Brain microvascular endothelial cell (primary cell): ENCODE measurements at regions of chrX and their contacts with region 1.

Region 1: GRCh38 chrX:110167952-110168451 is 149.9 kb downstream of the AMMECR1 start:
- DNase-seq: peak; percentile 28
- H3K4me3 ChIP-seq: no peak overlapping the region
- H3K27ac ChIP-seq: peak overlapping the region; percentile 82
- H3K27me3 ChIP-seq: no peaks in the 10 kb centered on the region
- CTCF ChIP-seq: peak; percentile 78

Region 2: DNA sequence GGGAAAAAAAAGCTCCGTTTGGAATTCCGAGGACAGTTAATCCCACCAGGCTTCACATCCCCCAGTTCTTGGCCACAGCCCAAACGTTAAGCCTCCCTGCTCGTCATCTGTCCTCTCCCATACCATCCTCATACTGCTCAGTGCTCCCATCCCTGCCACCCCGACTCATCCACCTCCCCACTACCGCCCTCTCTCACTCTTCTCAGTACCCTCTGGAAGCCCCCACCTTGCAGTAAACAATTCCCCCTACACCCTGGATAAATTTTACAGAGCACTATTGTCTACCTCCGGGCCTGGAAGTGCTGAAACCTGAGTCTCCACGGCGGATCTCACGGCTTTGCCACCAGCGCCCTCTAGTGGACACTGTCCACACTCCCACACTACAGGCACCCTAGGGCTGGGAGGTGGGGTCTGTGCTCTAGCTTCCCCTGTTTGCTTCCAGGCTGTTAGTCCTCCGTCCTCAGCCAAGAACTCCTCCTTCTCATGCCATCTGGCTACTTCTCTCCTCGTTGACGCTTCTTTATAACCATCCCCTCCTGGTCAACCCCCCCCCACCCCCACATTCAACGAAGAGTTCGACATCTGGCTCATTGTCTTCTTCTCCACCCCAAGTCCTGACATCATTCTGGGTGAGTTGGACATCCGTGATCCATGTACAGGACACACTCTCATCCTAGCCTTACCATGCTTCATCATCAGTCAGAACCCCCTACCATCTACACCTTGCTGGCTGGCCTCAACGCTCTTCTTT is 245.1 kb after region 1 on chrX:
- in situ Hi-C with region 1: loop called (anchors 25 kb)
- DNase-seq: peak; percentile 48
- H3K4me3 ChIP-seq: peak overlapping the region; percentile 20
- H3K27ac ChIP-seq: no peak overlapping the region
- H3K27me3 ChIP-seq: no peaks in the 10 kb centered on the region
- CTCF ChIP-seq: peak; percentile 89